ENCODE measurements at regions of chr19 and their contacts with region 1.

Region 1: GRCh38 chr19:45523642-45524256 is 16.5 kb downstream of the VASP start:
- DNase-seq: peak; percentile 62
- ATAC-seq: peak; percentile 98
- H3K4me3 Mint-ChIP-seq: no peak overlapping the region
- H3K27ac Mint-ChIP-seq: peak overlapping the region; percentile 71
- H3K4me1 Mint-ChIP-seq: peaks cover 25% of the 10 kb centered on the region
- H3K27me3 Mint-ChIP-seq: no peaks in the 10 kb centered on the region
- CTCF ChIP-seq: peak; percentile 58

Region 2: DNA sequence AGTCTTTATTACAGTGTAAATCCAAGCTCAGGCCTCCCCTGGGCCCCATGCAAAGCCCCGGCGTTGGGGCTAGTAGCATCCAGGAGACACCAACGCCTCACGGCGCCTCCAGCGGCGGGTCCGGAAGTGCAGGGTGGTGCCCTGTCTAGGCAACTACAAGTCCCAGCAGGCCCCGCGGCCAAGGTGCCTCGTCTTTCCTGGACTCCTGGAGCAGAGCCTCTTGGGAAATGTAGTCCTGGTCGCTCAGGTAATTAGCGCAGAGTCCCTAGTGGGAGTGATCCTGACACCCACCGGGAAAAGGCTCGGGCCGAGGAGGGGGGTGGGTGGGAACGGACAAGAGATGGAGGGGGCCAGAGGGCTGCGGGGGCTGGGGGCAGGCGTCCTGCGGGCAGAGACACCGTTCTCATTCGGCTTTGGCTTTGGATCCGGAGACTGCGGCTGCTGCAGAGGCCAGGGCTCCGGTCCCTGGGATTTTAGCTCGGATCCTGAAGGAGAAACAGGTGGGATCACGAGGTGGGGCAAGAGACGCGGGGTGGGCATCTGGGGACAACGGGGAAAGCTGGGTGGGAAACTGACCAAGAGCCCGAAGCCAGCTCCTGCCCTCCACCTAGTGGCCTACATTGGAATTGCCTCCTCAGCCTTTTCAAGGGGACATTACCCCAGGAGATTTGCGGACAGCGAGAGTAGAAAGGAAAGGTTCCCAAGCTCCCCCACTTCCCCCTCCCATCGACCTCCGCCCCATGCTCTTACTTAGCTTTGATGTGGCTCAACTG is 38.3 kb before region 1 on chr19:
- CTCF ChIA-PET with region 1: no interaction called
- POLR2A ChIA-PET with region 1: no interaction called
- intact Hi-C with region 1: loop called (anchors 1 kb)
- DNase-seq: peak; percentile 96
- ATAC-seq: peak; percentile 99
- H3K4me3 Mint-ChIP-seq: peak overlapping the region; percentile 91
- H3K27ac Mint-ChIP-seq: peak overlapping the region; percentile 74
- H3K4me1 Mint-ChIP-seq: peaks cover 8% of the 10 kb centered on the region
- H3K27me3 Mint-ChIP-seq: peaks cover 3% of the 10 kb centered on the region
- CTCF ChIP-seq: peak; percentile 84

Region 3: DNA sequence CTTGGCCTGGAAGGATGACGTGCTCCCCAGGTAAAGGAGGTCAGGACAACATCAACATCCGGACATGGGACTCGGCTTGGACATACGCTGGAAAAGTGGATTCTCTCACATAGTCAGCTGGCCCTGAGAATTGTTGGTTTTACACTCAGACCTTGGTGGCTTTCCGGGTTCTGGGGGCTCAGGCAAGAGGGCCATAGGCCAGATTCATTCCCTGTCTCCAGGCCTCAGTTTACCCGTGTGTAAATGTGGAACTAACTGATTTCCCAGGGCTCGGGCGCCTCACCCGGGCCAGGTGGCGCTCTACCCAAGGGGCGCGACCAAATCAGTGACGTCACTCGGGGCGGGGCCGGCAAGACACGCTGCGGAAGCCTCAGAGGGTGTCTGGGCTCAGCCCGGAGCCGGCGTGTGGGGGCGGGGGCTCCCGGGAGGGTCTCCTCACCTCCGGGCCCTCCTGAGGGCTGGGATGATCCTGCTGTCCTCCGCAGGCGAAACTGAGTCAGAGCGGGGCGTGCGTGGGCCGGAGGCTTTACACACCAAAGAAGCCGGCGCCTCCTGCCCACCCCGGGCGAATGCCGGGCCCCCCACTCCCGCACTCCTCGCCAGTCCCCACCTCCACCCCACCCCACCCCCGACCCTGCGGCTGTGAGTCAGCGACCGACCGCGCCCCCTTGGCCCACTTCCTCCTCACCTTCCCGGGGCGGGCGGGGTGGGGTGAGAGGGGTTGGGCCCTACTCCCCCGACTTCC is 17.3 kb before region 1 on chr19:
- CTCF ChIA-PET with region 1: no interaction called
- POLR2A ChIA-PET with region 1: interaction called, 4 read pairs
- intact Hi-C with region 1: loop called (anchors 1 kb)
- DNase-seq: peak; percentile 99
- ATAC-seq: peak; percentile 72
- H3K4me3 Mint-ChIP-seq: peak overlapping the region; percentile 92
- H3K27ac Mint-ChIP-seq: peak overlapping the region; percentile 97
- H3K4me1 Mint-ChIP-seq: peaks cover 54% of the 10 kb centered on the region
- H3K27me3 Mint-ChIP-seq: no peaks in the 10 kb centered on the region
- CTCF ChIP-seq: no peak

Region 4: DNA sequence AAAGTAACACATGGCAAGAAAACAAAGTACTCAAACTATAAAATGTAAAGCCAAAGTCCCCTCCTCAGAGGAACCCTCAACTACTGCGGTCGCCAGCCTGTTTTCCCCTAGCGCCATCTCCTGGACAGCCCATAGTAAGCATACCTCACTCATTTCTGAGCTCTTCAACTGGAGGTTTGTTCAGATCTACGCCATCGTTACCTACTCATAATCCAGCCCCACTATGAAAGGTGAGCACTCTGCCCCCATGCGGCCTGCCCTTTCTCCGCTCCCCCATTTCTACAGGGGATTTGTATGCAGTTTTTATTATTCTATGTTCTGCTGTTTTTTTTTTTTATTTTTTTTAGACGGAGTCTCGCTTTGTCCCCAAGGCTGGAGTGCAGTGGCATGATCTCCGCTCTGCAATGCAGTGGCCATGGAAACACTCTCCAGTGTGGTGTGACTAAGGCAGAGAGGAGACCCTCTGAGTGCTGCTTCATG is 34.7 kb after region 1 on chr19:
- CTCF ChIA-PET with region 1: interaction called, 7 read pairs
- POLR2A ChIA-PET with region 1: no interaction called
- intact Hi-C with region 1: loop called (anchors 1 kb)
- DNase-seq: peak; percentile 26
- ATAC-seq: peak; percentile 99
- H3K4me3 Mint-ChIP-seq: no peak overlapping the region
- H3K27ac Mint-ChIP-seq: no peak overlapping the region
- H3K4me1 Mint-ChIP-seq: peaks cover 25% of the 10 kb centered on the region
- H3K27me3 Mint-ChIP-seq: no peaks in the 10 kb centered on the region
- CTCF ChIP-seq: no peak

Region 5: DNA sequence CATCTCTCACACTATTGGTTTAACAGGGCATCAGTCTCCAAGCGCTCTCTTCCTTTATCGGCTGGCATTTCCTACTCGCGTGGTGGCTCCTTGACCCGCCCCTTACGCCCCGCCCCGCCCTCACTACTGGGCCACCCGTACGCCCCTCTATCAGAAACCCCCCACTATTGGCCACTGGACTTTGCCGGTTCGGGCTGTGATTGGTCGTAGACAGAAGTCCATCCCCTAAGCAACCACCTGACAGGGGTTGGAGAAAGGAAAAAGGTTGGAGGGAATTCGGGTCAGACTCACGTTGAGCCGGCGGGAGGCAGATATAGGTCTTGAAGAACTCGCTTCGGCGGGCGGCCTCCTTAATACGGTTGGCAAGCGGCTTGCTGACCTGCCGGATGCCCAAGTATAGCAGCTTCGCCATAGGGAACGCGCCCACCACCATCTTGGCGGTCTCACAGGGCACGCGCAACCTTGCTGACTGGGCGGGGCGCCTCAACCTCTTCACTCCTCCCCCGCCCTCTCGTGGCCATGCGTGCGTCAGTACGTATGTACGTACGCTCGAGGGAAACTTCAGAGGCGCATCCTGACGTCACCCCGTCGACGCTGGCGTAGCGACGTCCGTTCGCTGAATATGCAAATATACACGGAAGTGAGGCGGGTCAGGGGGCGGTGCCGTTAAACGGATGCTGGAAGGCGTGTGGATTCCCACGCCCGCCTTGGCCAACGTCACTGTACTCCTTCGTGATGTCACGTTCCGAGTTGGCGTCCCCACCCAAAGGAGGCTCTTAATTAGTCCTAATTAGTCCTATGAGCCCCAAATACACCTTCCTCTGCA is 60.8 kb after region 1 on chr19 and contains the start of gene OPA3:
- CTCF ChIA-PET with region 1: no interaction called
- POLR2A ChIA-PET with region 1: interaction called, 3 read pairs
- intact Hi-C with region 1: loop called (anchors 1 kb)
- DNase-seq: peak; percentile 94
- ATAC-seq: peak; percentile 89
- H3K4me3 Mint-ChIP-seq: peak within 1 kb of the TSS; percentile 96
- H3K27ac Mint-ChIP-seq: peak within 1 kb of the TSS; percentile 98
- H3K4me1 Mint-ChIP-seq: peaks cover 13% of the 10 kb centered on the region
- H3K27me3 Mint-ChIP-seq: peaks cover 5% of the 10 kb centered on the region
- CTCF ChIP-seq: no peak
- total RNA-seq, gene OPA3: 12.0 and 14.4 TPM in 2 replicates

Region 6: GRCh38 chr19:45681391-45682015 is 157.8 kb after region 1 on chr19:
- CTCF ChIA-PET with region 1: no interaction called
- POLR2A ChIA-PET with region 1: interaction called, 4 read pairs
- intact Hi-C with region 1: loop called (anchors 1 kb)
- DNase-seq: peak; percentile 92
- ATAC-seq: peak; percentile 92
- H3K4me3 Mint-ChIP-seq: peak overlapping the region; percentile 77
- H3K27ac Mint-ChIP-seq: no peak overlapping the region
- H3K4me1 Mint-ChIP-seq: peaks cover 17% of the 10 kb centered on the region
- H3K27me3 Mint-ChIP-seq: peaks cover 7% of the 10 kb centered on the region
- CTCF ChIP-seq: peak; percentile 69

Region 7: DNA sequence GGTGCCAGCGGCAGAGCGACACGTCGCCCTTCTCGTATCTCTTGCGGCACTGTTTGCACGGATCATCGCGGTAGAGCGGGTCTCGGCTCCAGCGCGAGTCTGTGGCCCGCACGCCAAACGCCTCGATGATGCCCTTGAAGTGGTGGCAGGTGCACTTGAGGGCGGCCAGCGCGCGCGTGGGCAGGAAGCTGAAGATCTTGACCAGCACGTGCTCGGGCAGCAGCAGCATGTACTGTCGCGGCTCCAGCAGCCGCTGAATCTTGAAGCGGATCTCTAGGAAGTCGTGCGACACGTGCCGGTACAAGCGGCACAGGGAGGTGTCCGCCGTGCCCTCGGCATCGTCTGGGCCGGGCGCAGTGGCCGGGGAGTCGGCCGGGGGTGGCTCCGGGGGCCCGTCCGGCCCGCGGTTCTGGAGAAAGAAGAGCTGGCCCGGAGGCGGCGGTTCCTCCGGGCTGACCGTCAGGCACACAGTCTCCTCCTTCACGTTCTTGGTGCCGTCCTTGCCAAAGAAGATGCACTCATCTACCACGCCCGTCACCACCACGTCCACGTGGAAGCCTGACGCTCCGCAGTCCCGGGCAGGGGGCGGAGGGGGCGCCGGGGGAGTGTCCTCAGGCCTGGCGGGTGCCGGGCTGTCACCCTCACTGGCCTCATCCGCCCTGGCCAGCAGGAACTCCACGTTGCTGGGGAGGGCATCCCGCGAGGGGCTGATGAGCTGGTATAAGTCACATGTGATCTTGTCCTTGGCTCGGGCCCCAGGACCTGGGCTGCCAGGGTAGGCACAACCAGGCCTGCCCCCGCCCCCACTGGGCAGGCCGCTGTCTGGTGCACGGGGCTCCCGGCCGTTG is 188.3 kb after region 1 on chr19:
- CTCF ChIA-PET with region 1: no interaction called
- POLR2A ChIA-PET with region 1: interaction called, 13 read pairs
- intact Hi-C with region 1: no loop called
- DNase-seq: no peak
- ATAC-seq: no peak
- H3K4me3 Mint-ChIP-seq: no peak overlapping the region
- H3K27ac Mint-ChIP-seq: no peak overlapping the region
- H3K4me1 Mint-ChIP-seq: peaks cover 40% of the 10 kb centered on the region
- H3K27me3 Mint-ChIP-seq: no peaks in the 10 kb centered on the region
- CTCF ChIP-seq: no peak

Measured in activated B cell treated with CpG ODN at 0.5 μM for 24 hours (primary cell).